ENCODE measurements at regions of chr11 and their contacts with region 1.

Region 1: DNA sequence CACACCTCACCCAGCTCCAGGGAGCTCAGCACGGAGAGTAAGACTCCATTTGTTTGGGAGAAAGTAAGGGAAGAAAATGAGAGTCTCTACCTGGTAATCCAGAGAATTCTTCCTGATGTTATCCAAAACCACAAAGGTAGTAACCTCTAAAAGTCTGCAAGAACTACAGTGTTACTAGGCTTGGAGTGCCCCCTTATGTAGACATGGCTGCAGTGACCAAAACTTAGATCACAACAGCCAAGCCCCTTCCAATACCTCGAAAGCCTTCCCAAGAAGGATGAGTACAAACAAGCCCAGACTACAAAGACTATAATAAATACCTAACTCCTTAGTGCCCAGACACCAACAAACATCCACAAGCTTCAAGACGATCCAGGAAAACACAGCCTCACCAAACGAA is 4.9 kb downstream of the UBE2L6 start:
- DNase-seq: no peak
- ATAC-seq: peak; percentile 26; the same call in 1 of the 3 replicates
- H3K4me3 ChIP-seq: no peak overlapping the region
- H3K27ac ChIP-seq: no peak overlapping the region
- H3K4me1 ChIP-seq: peaks cover 9% of the 10 kb centered on the region; the same call in 1 of the 2 replicates
- H3K27me3 ChIP-seq: no peaks in the 10 kb centered on the region; a peak in 1 of 5 replicates
- CTCF ChIP-seq: peak; percentile 53
- EP300 ChIP-seq: no peak
- POLR2A ChIP-seq: no peak
- RAD21 ChIP-seq: no peak; the same call in 1 of the 2 replicates

Region 2: DNA sequence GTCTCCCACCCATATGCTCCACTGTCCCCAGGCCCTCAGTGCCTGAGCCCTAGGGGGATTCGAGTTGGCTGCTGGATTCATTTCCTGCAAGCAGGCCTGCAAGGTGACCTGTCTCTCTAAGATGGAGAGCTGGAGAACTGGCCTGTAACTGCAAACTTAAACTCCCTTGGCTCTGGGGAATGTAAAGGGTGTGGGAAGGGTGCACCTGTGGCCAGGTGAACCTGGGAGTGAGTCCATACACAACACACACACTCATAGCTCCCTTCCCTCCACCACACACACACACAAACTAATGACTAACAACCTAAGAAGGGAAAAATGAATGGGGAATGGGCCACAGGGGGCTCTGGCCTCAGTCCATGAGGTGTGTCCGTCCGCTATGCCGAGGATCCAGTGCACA is 10.7 kb before region 1 on chr11:
- CTCF ChIA-PET with region 1: no interaction called
- POLR2A ChIA-PET with region 1: interaction called, 7 read pairs
- in situ Hi-C with region 1: no loop called
- intact Hi-C with region 1: loop called (anchors 1 kb)
- DNase-seq: no peak
- ATAC-seq: no peak
- H3K4me3 ChIP-seq: peak overlapping the region in 1 of 3 experiments; percentile 12; a peak in 2 of 6 replicates
- H3K27ac ChIP-seq: peak overlapping the region; percentile 13
- H3K4me1 ChIP-seq: peaks cover 26% of the 10 kb centered on the region
- H3K27me3 ChIP-seq: no peaks in the 10 kb centered on the region
- CTCF ChIP-seq: no peak
- EP300 ChIP-seq: no peak
- POLR2A ChIP-seq: no peak
- RAD21 ChIP-seq: no peak